ENCODE measurements at regions of chr2 and their contacts with region 1.

Region 1: GRCh38 chr2:54704688-54705605 is 18.5 kb upstream of the EML6 start:
- DNase-seq: no peak
- H3K4me3 ChIP-seq: no peak overlapping the region
- H3K27ac ChIP-seq: peak overlapping the region; percentile 48
- H3K4me1 ChIP-seq: no peaks in the 10 kb centered on the region
- H3K27me3 ChIP-seq: no peaks in the 10 kb centered on the region
- CTCF ChIP-seq: peak; percentile 55 to 72 (median 55)
- POLR2A ChIP-seq: no peak

Region 2: DNA sequence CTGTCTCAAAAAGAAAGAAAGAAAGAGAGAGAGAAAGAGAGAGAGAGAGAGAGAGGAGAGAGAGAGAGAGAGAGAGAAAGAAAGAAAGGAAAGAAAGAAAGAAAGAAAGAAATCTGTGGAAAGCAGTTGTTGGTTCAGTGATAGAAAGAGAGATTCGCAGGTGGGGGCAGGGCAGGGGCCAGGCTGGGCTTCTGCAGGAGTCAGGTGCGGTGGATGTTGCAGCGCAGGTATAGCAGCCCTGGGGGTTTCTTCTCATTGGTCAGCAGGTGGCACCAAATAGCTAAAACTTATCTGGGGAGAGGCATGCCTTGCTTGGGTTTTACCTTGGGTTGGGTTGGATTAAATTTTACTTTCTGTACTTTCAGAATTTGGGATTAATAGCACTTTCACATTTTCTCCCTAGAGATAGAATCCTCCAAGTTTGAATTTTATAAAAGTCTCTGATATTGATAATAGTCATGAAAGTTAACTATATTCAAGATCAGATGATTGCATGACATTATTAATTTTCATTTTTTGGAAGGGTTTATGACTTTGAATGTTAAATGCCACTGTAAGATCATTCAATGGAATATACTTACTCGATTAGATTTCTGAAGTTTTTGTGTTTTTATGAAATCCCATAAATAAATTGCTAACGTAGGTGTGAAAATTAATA is 182.2 kb before region 1 on chr2:
- intact Hi-C with region 1: loop called (anchors 10 kb)
- DNase-seq: no peak
- H3K4me3 ChIP-seq: no peak overlapping the region
- H3K27ac ChIP-seq: no peak overlapping the region
- H3K4me1 ChIP-seq: peaks cover 58% of the 10 kb centered on the region
- H3K27me3 ChIP-seq: no peaks in the 10 kb centered on the region
- CTCF ChIP-seq: peak; percentile 31 to 74 (median 53)
- POLR2A ChIP-seq: no peak

Region 3: GRCh38 chr2:54657664-54658083 is 47.3 kb before region 1 on chr2:
- intact Hi-C with region 1: loop called (anchors 10 kb)
- DNase-seq: peak in 1 of 2 donors; percentile 87
- H3K4me3 ChIP-seq: no peak overlapping the region
- H3K27ac ChIP-seq: peak overlapping the region; percentile 31
- H3K4me1 ChIP-seq: peaks cover 16% of the 10 kb centered on the region
- H3K27me3 ChIP-seq: no peaks in the 10 kb centered on the region
- CTCF ChIP-seq: peak in 2 of 3 experiments; percentile 39 to 47
- POLR2A ChIP-seq: no peak